AG04450 (cell line): ENCODE measurements at regions of chr10 and their contacts with region 1.

Region 1: GRCh38 chr10:118241229-118242137 is 100.6 kb downstream of the FAM204A start:
- DNase-seq: peak; percentile 57
- H3K4me3 ChIP-seq: no peak overlapping the region
- H3K27ac ChIP-seq: no peak overlapping the region
- H3K27me3 ChIP-seq: peaks cover 12% of the 10 kb centered on the region
- CTCF ChIP-seq: peak; percentile 94

Region 2: GRCh38 chr10:117442944-117443685 is 798.4 kb before region 1 on chr10:
- CTCF ChIA-PET with region 1: interaction called, 20 read pairs
- POLR2A ChIA-PET with region 1: no interaction called
- DNase-seq: no peak
- H3K4me3 ChIP-seq: no peak overlapping the region
- H3K27ac ChIP-seq: no peak overlapping the region
- H3K27me3 ChIP-seq: no peaks in the 10 kb centered on the region
- CTCF ChIP-seq: peak; percentile 71

Region 3: DNA sequence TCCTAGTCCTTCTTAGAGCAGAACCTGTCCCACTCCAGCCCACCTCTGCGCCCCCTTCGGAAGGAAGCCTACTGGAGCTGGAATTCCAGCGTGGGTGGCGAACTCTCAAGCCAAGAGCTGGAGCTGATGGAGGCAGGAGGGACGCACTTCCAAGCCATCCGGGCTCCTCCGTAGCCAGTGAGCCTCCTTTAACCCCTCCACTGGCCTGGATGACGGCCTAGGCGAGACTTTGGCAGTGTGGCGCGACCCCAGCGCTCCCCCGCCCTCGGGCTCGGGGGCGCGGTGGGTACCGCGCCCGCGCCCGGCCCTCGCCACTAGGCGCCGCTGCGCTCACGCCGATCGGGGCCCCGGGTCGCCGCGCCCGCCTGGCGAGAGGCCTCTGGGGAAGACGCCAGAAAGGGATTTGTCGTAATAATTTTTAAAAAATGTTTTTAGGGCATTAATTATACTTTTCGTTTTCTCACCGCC is 704.0 kb before region 1 on chr10:
- CTCF ChIA-PET with region 1: interaction called, 20 read pairs
- POLR2A ChIA-PET with region 1: no interaction called
- DNase-seq: no peak
- H3K4me3 ChIP-seq: no peak overlapping the region
- H3K27ac ChIP-seq: no peak overlapping the region
- H3K27me3 ChIP-seq: peaks cover 88% of the 10 kb centered on the region
- CTCF ChIP-seq: peak; percentile 35; the same call in 1 of the 2 replicates

Region 4: GRCh38 chr10:117860823-117861222 is 380.7 kb before region 1 on chr10:
- CTCF ChIA-PET with region 1: interaction called, 10 read pairs
- POLR2A ChIA-PET with region 1: no interaction called
- DNase-seq: no peak
- H3K4me3 ChIP-seq: no peak overlapping the region
- H3K27ac ChIP-seq: no peak overlapping the region
- H3K27me3 ChIP-seq: no peaks in the 10 kb centered on the region
- CTCF ChIP-seq: peak; percentile 41

Region 5: DNA sequence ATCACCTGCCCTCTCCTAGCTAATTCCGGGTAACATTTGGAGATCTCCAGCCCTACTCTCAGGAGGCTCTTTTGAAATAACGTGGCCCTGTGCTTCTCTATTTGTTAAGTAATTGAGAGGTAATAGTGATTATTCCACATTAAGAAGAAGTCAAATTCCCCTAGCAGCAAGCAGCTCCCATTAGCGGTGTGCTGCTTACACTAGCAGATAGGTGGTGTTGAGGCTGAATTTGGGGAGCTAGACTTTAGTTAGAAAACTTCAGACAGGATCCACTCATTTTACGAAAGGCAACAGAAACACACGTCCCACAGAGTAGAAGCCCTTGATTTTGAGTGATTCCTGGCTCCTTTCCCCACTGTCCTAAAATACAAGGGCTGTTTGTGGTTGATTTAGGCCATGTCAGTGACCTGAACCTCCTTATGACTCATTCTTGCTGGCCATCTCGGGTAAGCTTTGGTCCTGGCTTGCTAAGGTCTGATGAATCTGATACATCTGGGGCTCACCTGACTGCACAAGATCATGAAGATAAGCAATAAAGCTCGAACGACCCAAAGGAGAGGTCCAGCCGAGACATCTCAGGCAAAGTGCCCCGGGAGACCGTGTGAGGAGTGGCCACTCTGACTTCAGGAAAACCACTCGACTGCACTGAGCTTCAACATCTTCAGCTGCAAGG is 23.5 kb after region 1 on chr10:
- CTCF ChIA-PET with region 1: interaction called, 17 read pairs
- POLR2A ChIA-PET with region 1: no interaction called
- DNase-seq: no peak
- H3K4me3 ChIP-seq: no peak overlapping the region
- H3K27ac ChIP-seq: no peak overlapping the region
- H3K27me3 ChIP-seq: peaks cover 2% of the 10 kb centered on the region
- CTCF ChIP-seq: no peak

Region 6: GRCh38 chr10:118290471-118290995 is 49.0 kb after region 1 on chr10:
- CTCF ChIA-PET with region 1: no interaction called
- POLR2A ChIA-PET with region 1: no interaction called
- DNase-seq: no peak
- H3K4me3 ChIP-seq: no peak overlapping the region
- H3K27ac ChIP-seq: no peak overlapping the region
- H3K27me3 ChIP-seq: no peaks in the 10 kb centered on the region
- CTCF ChIP-seq: no peak

Region 7: DNA sequence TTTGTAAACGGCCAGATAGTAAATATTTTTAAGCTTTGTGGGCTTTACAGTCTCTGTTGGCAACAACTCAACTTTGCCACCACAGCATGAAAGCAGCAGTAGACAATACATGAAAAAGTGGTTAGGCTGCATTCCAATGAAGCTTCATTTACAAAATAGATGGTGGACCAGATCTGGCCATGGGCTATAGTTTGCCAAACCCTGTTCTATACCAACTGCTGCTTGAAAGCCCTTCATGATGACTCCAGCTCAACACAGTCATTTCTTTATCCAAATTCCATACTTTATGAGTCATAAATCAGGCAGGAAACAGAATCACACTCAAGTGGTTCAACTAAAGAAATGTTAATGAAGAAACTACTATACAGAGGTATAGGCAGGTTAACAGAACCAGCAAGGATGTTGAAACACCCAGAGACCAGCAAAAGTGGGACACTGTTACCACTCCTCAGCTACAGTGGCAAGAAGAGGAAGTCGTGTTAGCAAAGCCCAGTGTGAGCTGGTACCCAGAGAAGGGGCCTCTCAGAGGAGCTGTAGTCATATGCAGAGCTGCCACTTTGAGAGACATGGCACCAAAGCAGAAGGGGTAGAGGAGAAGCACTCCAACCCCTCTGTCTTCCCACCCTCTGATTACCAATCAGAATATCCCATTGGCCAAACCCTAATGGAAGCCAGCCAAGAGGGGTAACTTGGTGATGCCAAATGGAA is 281.5 kb after region 1 on chr10:
- CTCF ChIA-PET with region 1: no interaction called
- POLR2A ChIA-PET with region 1: no interaction called
- DNase-seq: no peak
- H3K4me3 ChIP-seq: no peak overlapping the region
- H3K27ac ChIP-seq: no peak overlapping the region
- H3K27me3 ChIP-seq: no peaks in the 10 kb centered on the region
- CTCF ChIP-seq: no peak